IMR-90 (cell line): ENCODE measurements at regions of chr5 and their contacts with region 1.

Region 1: GRCh38 chr5:115366223-115366622 is 69.8 kb upstream of the CCDC112 start:
- DNase-seq: peak; percentile 94
- ATAC-seq: peak; percentile 98
- H3K4me3 ChIP-seq: no peak overlapping the region
- H3K27ac ChIP-seq: no peak overlapping the region
- H3K4me1 ChIP-seq: peaks cover 5% of the 10 kb centered on the region
- H3K27me3 ChIP-seq: no peaks in the 10 kb centered on the region
- CTCF ChIP-seq: no peak
- POLR2A ChIP-seq: no peak
- RAD21 ChIP-seq: no peak

Region 2: GRCh38 chr5:115389799-115390382 is 23.7 kb after region 1 on chr5:
- CTCF ChIA-PET with region 1: no interaction called
- POLR2A ChIA-PET with region 1: interaction called, 11 read pairs
- dilution Hi-C with region 1: no loop called
- in situ Hi-C with region 1: no loop called
- intact Hi-C with region 1: no loop called
- DNase-seq: no peak
- ATAC-seq: no peak
- H3K4me3 ChIP-seq: no peak overlapping the region
- H3K27ac ChIP-seq: no peak overlapping the region
- H3K4me1 ChIP-seq: peaks cover 3% of the 10 kb centered on the region; the same call in 1 of the 2 replicates
- H3K27me3 ChIP-seq: no peaks in the 10 kb centered on the region
- CTCF ChIP-seq: no peak
- POLR2A ChIP-seq: no peak
- RAD21 ChIP-seq: no peak

Region 3: GRCh38 chr5:115435778-115436712 is 69.8 kb after region 1 on chr5:
- CTCF ChIA-PET with region 1: no interaction called
- POLR2A ChIA-PET with region 1: no interaction called
- dilution Hi-C with region 1: no loop called
- in situ Hi-C with region 1: no loop called
- intact Hi-C with region 1: no loop called
- DNase-seq: peak; percentile 50
- ATAC-seq: peak; percentile 42; the same call in 1 of the 2 replicates
- H3K4me3 ChIP-seq: no peak overlapping the region
- H3K27ac ChIP-seq: no peak overlapping the region
- H3K4me1 ChIP-seq: no peaks in the 10 kb centered on the region
- H3K27me3 ChIP-seq: no peaks in the 10 kb centered on the region; the same call in 1 of the 2 replicates
- CTCF ChIP-seq: no peak
- POLR2A ChIP-seq: no peak
- RAD21 ChIP-seq: no peak

Region 4: DNA sequence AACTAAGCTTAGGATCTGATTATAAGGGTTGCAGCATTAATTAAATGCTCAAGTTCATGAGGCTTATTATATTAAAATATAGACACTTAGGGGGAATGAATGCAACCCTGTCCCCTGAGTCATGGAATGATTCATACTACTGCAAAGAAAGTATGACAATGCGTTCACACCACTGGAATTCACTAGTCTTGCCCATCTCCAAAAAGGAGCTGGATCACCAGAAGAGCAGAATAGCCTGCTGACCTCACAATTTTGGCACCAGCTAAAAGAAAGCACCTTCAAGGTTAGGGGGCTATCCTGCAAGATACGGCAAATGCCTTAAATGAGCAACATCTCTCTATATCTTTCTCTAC is 291.6 kb after region 1 on chr5:
- CTCF ChIA-PET with region 1: no interaction called
- POLR2A ChIA-PET with region 1: no interaction called
- dilution Hi-C with region 1: no loop called
- in situ Hi-C with region 1: no loop called
- intact Hi-C with region 1: no loop called
- DNase-seq: peak; percentile 81
- ATAC-seq: peak; percentile 91
- H3K4me3 ChIP-seq: no peak overlapping the region
- H3K27ac ChIP-seq: no peak overlapping the region
- H3K4me1 ChIP-seq: no peaks in the 10 kb centered on the region; the same call in 1 of the 2 replicates
- H3K27me3 ChIP-seq: peaks cover 8% of the 10 kb centered on the region; the same call in 1 of the 2 replicates
- CTCF ChIP-seq: no peak
- POLR2A ChIP-seq: no peak
- RAD21 ChIP-seq: no peak

Region 5: GRCh38 chr5:116806836-116807235 is 1440.6 kb after region 1 on chr5:
- CTCF ChIA-PET with region 1: no interaction called
- POLR2A ChIA-PET with region 1: no interaction called
- dilution Hi-C with region 1: no loop called
- in situ Hi-C with region 1: no loop called
- intact Hi-C with region 1: no loop called
- DNase-seq: no peak
- ATAC-seq: no peak
- H3K4me3 ChIP-seq: no peak overlapping the region
- H3K27ac ChIP-seq: no peak overlapping the region
- H3K4me1 ChIP-seq: no peaks in the 10 kb centered on the region
- H3K27me3 ChIP-seq: no peaks in the 10 kb centered on the region
- CTCF ChIP-seq: no peak
- POLR2A ChIP-seq: no peak
- RAD21 ChIP-seq: no peak